Calu3 (cell line): ENCODE measurements at regions of chrX and their contacts with region 1.

Region 1: DNA sequence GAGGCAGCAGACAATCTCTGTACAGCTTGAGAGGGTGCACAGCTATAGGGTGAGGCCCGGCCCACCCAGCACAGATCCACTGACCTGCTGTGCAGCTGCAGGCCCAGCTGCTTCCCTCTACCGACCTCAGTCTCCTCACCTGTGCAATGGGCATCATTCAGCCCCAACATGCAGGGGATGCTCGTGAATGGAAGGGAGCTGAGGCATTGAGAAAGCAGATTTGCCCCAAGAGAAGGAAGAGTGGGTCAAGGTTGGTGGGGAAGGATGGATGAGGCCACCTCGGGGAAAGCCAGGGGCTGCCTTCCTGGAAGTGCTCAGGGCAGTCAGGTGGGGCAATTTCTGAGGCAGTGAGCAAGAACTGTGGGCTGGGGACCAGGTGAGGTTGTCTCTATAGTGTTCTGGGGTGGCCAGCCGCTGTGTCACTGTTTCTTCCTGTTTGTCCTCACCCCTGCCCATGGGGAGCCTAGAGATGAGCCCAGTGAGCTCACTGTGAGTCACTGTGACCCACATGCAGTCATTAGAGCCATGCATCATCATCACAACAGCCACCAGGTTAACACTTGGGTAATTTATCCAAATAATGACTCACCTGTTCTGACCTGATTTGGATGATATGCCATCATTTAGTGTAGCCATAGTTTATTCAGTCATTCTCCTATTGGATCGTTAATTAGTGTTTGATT is 22.2 kb upstream of the XAGE2 start:
- DNase-seq: peak; percentile 48
- H3K4me3 Mint-ChIP-seq: no peak overlapping the region
- H3K27ac Mint-ChIP-seq: no peak overlapping the region
- H3K4me1 Mint-ChIP-seq: peaks cover 14% of the 10 kb centered on the region
- H3K27me3 Mint-ChIP-seq: no peaks in the 10 kb centered on the region
- CTCF ChIP-seq: no peak

Region 2: DNA sequence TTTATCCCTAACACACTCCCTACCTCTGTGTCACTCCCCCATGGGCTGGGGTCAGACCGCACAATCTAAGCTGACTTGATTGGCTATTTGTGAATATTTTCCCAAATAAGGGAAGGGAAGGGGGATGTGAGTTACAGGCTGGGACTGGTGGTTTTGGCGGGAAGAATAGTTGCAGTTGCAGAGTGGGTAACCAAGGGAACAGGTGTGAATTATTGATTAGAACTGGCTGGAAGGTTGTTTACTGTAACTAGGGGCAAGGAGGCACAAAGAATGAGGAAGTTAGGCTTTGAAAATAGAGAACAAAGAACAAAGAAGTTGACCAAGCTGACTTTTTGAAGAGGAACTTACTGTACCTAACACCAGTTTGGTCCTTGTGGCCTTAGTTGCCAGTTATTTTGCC is 65.8 kb before region 1 on chrX:
- CTCF ChIA-PET with region 1: no interaction called
- intact Hi-C with region 1: loop called (anchors 10 kb)
- DNase-seq: peak; percentile 54
- H3K4me3 Mint-ChIP-seq: no peak overlapping the region
- H3K27ac Mint-ChIP-seq: peak overlapping the region; percentile 33
- H3K4me1 Mint-ChIP-seq: peaks cover 13% of the 10 kb centered on the region
- H3K27me3 Mint-ChIP-seq: no peaks in the 10 kb centered on the region
- CTCF ChIP-seq: no peak